ENCODE measurements at regions of chr12 and their contacts with region 1.

Region 1: DNA sequence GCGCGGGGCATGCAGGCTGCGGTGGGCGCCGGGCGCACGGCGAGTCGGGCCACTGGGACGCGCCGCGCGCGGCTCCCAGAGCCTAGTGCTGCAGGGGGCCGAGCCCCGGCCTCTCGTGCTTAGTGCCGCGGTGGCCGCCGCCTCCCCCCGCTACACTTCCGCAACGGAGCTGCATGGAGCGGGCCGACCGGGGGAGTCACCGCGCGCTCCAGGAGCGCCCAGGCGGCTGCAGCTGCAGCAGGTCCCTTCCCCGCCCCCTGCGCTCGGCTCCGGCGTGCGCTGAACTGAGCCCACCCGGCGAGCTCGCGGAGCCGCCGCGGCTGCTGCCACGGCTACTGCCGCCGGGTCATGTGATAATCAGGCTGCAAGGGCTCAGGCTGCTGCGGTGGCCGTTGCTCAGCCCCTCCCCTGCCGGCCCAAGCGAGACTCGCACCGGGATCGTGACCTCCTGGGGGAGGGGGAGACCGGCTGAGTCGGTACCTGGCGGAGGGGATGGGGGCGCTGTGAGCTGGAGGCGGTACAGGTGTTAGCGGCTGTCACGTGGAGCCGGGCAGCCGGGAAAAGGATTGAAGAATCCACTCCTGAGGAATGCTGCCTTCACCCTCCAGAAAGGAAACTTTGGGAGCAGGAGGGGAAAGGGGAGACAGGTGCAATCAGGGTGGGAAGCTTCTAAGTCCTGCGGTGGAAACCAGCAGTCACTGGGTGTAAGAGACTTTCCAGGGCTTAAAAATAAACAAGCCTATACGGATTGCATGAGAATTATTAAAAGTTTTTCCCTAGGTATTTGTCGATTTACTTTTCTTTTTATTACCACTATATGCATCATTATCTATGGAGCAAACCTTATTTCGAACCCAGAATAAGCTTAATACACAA is at the start of gene PPM1H:
- DNase-seq: peak; percentile 97 to 98
- H3K4me3 ChIP-seq: peak within 1 kb of the TSS; percentile 96
- H3K4me3 Mint-ChIP-seq: peak within 1 kb of the TSS; percentile 77
- H3K27ac Mint-ChIP-seq: peak within 1 kb of the TSS; percentile 89
- H3K4me1 ChIP-seq: peaks cover 25% of the 10 kb centered on the region
- H3K4me1 Mint-ChIP-seq: peaks cover 15% of the 10 kb centered on the region
- H3K27me3 ChIP-seq: no peaks in the 10 kb centered on the region
- H3K27me3 Mint-ChIP-seq: no peaks in the 10 kb centered on the region
- CTCF ChIP-seq: peak; percentile 90 to 92
- total RNA-seq, gene PPM1H: 145 and 151 TPM in 2 replicates

Region 2: GRCh38 chr12:62841846-62842245 is 93.2 kb before region 1 on chr12:
- CTCF ChIA-PET with region 1: interaction called, 3 read pairs
- POLR2A ChIA-PET with region 1: no interaction called
- intact Hi-C with region 1: loop called (anchors 5 kb)
- DNase-seq: no peak
- H3K4me3 ChIP-seq: no peak overlapping the region
- H3K4me3 Mint-ChIP-seq: no peak overlapping the region
- H3K27ac Mint-ChIP-seq: peak overlapping the region; percentile 22
- H3K4me1 ChIP-seq: peaks cover 79% of the 10 kb centered on the region
- H3K4me1 Mint-ChIP-seq: peaks cover 41% of the 10 kb centered on the region
- H3K27me3 ChIP-seq: no peaks in the 10 kb centered on the region
- H3K27me3 Mint-ChIP-seq: no peaks in the 10 kb centered on the region
- CTCF ChIP-seq: no peak

Region 3: DNA sequence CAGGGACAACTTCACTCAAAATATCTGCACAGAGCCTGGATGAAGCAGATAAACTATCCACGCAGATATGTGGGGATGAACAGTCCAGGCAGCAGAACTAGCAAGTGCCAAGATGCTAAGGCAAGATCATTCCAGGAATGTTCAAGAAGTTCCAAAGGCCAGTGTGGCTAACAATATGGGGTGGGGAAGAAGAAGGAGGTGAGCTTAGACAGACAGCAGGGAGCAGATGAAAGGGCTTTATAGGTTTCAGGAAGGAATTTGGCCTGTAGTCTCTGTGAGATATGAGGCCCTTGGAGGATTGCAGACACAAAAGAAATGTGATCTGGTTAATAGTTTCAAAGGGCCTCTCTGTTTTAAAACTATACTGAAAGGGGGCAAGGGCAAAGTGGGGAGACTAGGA is 63.4 kb after region 1 on chr12:
- CTCF ChIA-PET with region 1: no interaction called
- POLR2A ChIA-PET with region 1: interaction called, 4 read pairs
- intact Hi-C with region 1: loop called (anchors 1 kb)
- DNase-seq: peak; percentile 65 to 80
- H3K4me3 ChIP-seq: no peak overlapping the region
- H3K4me3 Mint-ChIP-seq: peak overlapping the region; percentile 67
- H3K27ac Mint-ChIP-seq: peak overlapping the region; percentile 91
- H3K4me1 ChIP-seq: peaks cover 43% of the 10 kb centered on the region
- H3K4me1 Mint-ChIP-seq: peaks cover 30% of the 10 kb centered on the region
- H3K27me3 ChIP-seq: no peaks in the 10 kb centered on the region
- H3K27me3 Mint-ChIP-seq: no peaks in the 10 kb centered on the region
- CTCF ChIP-seq: no peak

Region 4: DNA sequence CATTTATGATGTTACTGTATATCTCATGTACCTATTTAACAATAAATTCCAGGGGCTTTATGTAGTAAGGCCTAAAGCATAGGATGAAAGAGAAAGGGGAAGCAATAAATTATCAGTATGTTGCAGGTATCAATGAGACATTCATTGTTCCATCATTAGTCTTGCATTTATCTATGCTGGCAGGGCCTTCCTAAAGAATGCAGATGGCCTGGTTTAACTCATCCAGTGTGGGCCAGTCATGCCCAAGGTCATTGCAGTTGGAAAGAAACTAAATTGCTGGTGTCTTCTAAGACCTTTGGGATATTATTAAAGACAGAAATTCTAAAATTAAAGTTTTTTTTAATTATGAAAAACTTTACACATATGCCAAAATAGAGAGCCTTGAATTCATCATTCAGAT is 117.7 kb after region 1 on chr12:
- CTCF ChIA-PET with region 1: no interaction called
- POLR2A ChIA-PET with region 1: interaction called, 3 read pairs
- intact Hi-C with region 1: loop called (anchors 1 kb)
- DNase-seq: peak; percentile 64 to 75
- H3K4me3 ChIP-seq: no peak overlapping the region
- H3K4me3 Mint-ChIP-seq: no peak overlapping the region
- H3K27ac Mint-ChIP-seq: peak overlapping the region; percentile 30
- H3K4me1 ChIP-seq: peaks cover 34% of the 10 kb centered on the region
- H3K4me1 Mint-ChIP-seq: peaks cover 47% of the 10 kb centered on the region
- H3K27me3 ChIP-seq: no peaks in the 10 kb centered on the region
- H3K27me3 Mint-ChIP-seq: no peaks in the 10 kb centered on the region
- CTCF ChIP-seq: no peak

Region 5: DNA sequence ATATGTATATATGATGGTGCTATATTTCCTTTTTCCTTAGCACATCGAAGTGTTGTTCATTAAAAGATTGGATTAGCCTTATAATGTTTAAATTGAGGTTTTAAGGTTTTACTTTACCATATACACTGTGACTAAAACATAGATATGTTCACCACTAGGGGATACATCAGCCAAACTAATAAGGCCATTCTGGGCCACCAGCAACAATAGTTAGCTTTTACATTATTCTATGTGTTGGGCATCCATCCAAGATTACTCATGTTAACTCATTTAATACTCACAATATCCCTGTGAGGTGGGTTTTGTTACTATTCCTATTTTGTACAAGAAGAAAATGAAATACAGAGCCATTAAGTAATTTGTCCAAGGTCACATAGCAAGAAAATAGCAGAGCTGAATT is 418.5 kb after region 1 on chr12:
- CTCF ChIA-PET with region 1: no interaction called
- POLR2A ChIA-PET with region 1: no interaction called
- intact Hi-C with region 1: no loop called
- DNase-seq: no peak
- H3K4me3 ChIP-seq: no peak overlapping the region
- H3K4me3 Mint-ChIP-seq: no peak overlapping the region
- H3K27ac Mint-ChIP-seq: no peak overlapping the region
- H3K4me1 ChIP-seq: peaks cover 7% of the 10 kb centered on the region
- H3K4me1 Mint-ChIP-seq: peaks cover 6% of the 10 kb centered on the region
- H3K27me3 ChIP-seq: no peaks in the 10 kb centered on the region
- H3K27me3 Mint-ChIP-seq: peaks cover 4% of the 10 kb centered on the region
- CTCF ChIP-seq: no peak